Lower leg skin (tissue), 4 donors: ENCODE measurements at regions of chr5 and their contacts with region 1.

Region 1: GRCh38 chr5:114449860-114450421 is 88.1 kb downstream of the KCNN2 start:
- DNase-seq: peak; percentile 30 to 89
- H3K4me3 ChIP-seq: no peak overlapping the region
- CTCF ChIP-seq: peak in 1 of 3 donors; percentile 19
- POLR2A ChIP-seq: no peak

Region 2: GRCh38 chr5:113612060-113612496 is 837.9 kb before region 1 on chr5:
- intact Hi-C with region 1: loop called (anchors 10 kb)
- DNase-seq: no peak
- H3K4me3 ChIP-seq: no peak overlapping the region
- CTCF ChIP-seq: no peak
- POLR2A ChIP-seq: no peak

Region 3: DNA sequence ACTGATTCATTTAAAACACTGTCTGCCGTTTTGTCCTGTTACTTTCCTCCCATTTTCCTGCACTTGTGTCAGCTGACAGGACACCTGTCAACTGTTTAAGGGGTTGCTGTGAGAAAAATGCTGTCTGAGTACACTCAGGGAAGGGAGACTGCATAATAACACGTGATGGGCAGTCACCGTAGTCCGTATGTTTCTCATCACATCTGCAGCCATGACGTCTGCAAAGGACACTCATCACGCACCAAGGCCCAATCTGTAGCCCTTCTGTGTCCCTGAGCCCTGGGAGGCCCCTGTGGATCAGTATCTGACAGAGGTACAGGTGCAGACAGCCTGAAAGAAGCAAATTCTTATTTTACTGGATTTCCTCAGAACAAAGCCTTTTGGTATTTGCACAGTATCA is 540.2 kb before region 1 on chr5:
- intact Hi-C with region 1: no loop called
- DNase-seq: no peak
- H3K4me3 ChIP-seq: no peak overlapping the region
- CTCF ChIP-seq: no peak
- POLR2A ChIP-seq: no peak

Region 4: DNA sequence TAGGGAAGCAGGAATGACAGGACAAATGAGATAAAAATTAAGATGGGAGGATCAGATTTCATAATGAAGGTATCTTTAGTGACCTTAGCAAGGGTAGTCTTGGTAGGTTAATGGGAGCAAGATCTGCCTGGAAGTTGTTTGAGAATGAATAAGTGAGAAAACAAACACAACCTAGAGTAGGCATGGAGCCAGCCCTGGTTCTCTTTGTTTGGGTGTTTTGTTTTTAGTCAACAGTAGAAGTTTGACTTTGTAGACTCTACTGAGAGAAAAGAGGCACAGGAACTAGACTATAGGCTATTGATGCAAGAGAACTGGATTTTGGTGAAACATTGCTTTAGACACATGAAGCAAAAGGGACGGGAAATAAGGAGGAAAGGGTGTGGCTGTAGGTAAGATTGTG is 47.7 kb before region 1 on chr5:
- intact Hi-C with region 1: no loop called
- DNase-seq: no peak
- H3K4me3 ChIP-seq: no peak overlapping the region
- CTCF ChIP-seq: no peak
- POLR2A ChIP-seq: no peak

Region 5: GRCh38 chr5:114500756-114501155 is 50.8 kb after region 1 on chr5:
- intact Hi-C with region 1: no loop called
- DNase-seq: no peak
- H3K4me3 ChIP-seq: no peak overlapping the region
- CTCF ChIP-seq: no peak
- POLR2A ChIP-seq: no peak

Region 6: GRCh38 chr5:114744406-114744805 is 294.5 kb after region 1 on chr5:
- intact Hi-C with region 1: no loop called
- DNase-seq: no peak
- H3K4me3 ChIP-seq: no peak overlapping the region
- CTCF ChIP-seq: no peak
- POLR2A ChIP-seq: no peak